Brain microvascular endothelial cell (primary cell): ENCODE measurements at regions of chr7 and their contacts with region 1.

Region 1: GRCh38 chr7:23520582-23520981 is 11.2 kb downstream of the TRA2A start:
- DNase-seq: no peak
- H3K4me3 ChIP-seq: no peak overlapping the region
- H3K27ac ChIP-seq: no peak overlapping the region
- H3K27me3 ChIP-seq: no peaks in the 10 kb centered on the region
- CTCF ChIP-seq: peak; percentile 40

Region 2: GRCh38 chr7:23273141-23273599 is 247.4 kb before region 1 on chr7:
- in situ Hi-C with region 1: loop called (anchors 10 kb)
- DNase-seq: peak; percentile 98
- H3K4me3 ChIP-seq: no peak overlapping the region
- H3K27ac ChIP-seq: no peak overlapping the region
- H3K27me3 ChIP-seq: peaks cover 2% of the 10 kb centered on the region
- CTCF ChIP-seq: peak; percentile 92